Activated T-helper 1 cell treated with anti-CD3 and anti-CD28 coated beads, Interleukin-12 subunit alpha, Interleukin-12 subunit beta, Interleukin-2, Interleukin-4 antibody, amounts not matched to agents 30 ng/mL and 10 ng/mL and 1 ng/mL, durations not matched to agents 14 hours and 24 hours and 36 hours (primary cell): ENCODE measurements at regions of chr9 and their contacts with region 1.

Region 1: GRCh38 chr9:83106263-83106662 is 43.3 kb upstream of the RASEF start:
- DNase-seq: no peak
- H3K4me3 Mint-ChIP-seq: no peak overlapping the region
- H3K27ac Mint-ChIP-seq: no peak overlapping the region
- H3K4me1 Mint-ChIP-seq: no peaks in the 10 kb centered on the region
- H3K27me3 Mint-ChIP-seq: no peaks in the 10 kb centered on the region

Region 2: GRCh38 chr9:83231033-83231432 is 124.8 kb after region 1 on chr9:
- intact Hi-C with region 1: no loop called
- DNase-seq: no peak
- H3K4me3 Mint-ChIP-seq: no peak overlapping the region
- H3K27ac Mint-ChIP-seq: no peak overlapping the region
- H3K4me1 Mint-ChIP-seq: no peaks in the 10 kb centered on the region
- H3K27me3 Mint-ChIP-seq: no peaks in the 10 kb centered on the region

Region 3: GRCh38 chr9:83257937-83258891 is 152.0 kb after region 1 on chr9:
- intact Hi-C with region 1: loop called (anchors 2 kb)
- DNase-seq: no peak
- H3K4me3 Mint-ChIP-seq: no peak overlapping the region
- H3K27ac Mint-ChIP-seq: no peak overlapping the region
- H3K4me1 Mint-ChIP-seq: no peaks in the 10 kb centered on the region
- H3K27me3 Mint-ChIP-seq: no peaks in the 10 kb centered on the region